ENCODE measurements at regions of chr3 and their contacts with region 1.

Region 1: DNA sequence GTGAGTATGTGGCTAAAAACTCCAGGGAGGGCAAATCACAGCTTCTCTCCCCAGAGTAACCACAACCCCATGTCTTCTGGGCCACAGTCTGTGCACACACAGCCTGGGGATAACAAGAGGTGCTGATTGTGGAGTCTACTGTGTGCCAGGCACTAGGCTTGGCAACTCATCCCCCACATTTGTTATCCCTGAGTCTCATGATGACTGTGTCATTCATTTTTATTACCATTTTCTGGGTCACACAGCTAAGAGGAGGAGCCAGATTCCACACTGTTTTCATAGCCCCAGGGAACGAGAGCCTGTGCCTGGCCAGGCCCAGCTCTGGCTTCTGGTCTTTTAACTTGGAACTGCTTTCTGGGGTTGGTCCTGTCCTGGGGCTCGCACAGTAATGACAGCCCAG is 34.5 kb downstream of the ESYT3 start:
- DNase-seq: no peak

Region 2: GRCh38 chr3:139267300-139268246 is 798.7 kb after region 1 on chr3:
- intact Hi-C with region 1: no loop called
- DNase-seq: no peak

Region 3: DNA sequence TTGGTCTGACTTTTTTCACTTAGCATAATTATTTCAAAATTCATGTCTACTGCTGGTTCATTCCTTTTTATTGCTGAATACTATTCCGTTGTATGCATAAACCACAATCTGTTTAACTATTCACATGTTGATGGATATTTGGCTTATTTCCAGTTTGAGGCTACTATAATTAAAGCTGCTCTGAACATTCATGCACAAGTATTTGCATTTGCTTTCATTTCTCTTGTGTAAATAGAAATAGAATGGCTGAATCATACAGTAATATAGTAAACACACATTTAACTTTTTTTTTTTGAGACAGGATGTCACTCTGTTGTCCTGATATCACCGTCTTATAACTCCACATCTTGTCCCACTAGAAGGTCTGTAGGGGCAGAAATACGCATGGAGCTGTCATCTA is 1151.6 kb after region 1 on chr3:
- intact Hi-C with region 1: loop called in 1 of 2 experiments (anchors 5 kb)
- DNase-seq: no peak

Measured in posterior vena cava (tissue), 2 donors.